Uterus (tissue), 4 donors: ENCODE measurements at regions of chr17 and their contacts with region 1.

Region 1: DNA sequence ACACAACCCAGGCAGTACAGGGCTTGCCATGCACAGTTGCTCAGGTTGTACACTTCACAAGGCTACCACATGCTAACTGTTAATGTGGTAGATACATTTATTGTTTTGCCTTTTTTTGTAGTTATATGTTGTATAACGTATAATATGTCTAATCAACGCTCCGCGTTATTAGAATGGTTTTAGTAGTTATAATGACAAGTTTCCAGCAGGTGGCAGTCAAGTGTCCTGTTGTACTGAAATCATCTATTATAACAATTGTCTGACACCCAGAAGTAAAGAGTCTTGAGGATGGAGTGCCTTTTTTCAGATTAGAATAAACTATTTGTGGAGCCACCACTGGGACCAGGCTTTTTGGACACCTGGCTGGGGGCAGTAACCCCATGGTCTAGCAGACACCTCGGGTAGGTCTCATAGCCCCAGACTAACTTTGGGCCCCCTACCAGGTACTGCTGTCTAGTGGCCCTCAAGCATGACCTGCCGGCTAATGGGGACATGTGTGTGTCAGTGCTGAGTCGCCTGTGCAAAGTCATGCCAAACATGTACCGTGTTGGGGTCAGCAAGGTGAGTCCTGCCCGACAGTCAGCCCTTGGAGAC is 32.8 kb downstream of the MYO15A start:
- DNase-seq: peak in 1 of 2 donors; percentile 47
- H3K4me3 ChIP-seq: no peak overlapping the region
- H3K27ac ChIP-seq: no peak overlapping the region
- H3K4me1 ChIP-seq: no peaks in the 10 kb centered on the region
- H3K27me3 ChIP-seq: no peaks in the 10 kb centered on the region
- CTCF ChIP-seq: peak; percentile 60 to 83 (median 68)
- POLR2A ChIP-seq: no peak

Region 2: DNA sequence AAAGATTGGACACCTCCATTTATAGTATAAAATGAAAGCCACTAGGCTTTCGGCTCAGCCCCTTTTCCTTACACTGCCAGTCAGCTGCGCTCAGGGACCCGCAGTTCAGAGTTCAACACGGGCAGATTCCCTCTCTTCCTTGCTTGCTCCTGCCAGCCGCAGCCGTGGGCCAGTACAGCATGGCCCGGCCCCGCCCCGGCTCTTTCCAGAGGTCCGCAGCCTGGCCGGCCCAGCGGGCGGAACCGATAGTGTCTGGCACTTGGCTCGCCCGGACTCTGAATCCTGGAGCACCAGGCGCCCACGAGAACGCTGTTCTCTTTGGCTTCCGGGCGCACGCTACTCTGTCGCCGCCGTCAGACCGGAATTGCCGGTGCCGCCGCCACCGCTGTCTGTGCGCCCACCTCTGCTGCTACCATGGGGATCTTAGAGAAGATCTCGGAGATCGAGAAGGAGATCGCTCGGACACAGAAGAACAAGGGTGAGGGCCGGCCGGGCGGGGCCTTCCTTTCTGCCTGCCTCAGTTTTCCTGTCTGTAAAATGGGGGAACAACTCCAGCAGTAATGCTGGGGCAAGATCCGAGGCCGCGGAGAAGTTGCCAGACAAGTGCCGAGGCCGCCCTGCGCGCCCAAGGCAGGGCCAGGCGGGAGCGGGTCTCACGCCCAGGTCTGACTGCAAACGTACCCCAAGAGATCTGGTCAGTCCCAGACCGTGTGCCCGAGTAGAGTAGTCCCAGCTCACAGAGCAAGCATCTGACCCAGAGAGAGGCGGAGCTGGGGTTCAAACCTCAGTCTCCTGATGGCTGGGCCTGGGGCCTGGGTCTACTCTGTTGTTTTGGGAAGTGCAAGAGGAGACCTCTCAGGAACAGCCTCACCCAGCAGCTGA is 53.5 kb before region 1 on chr17 and contains the start of gene DRG2:
- intact Hi-C with region 1: no loop called
- DNase-seq: peak; percentile 87 to 95
- H3K4me3 ChIP-seq: peak within 1 kb of the TSS; percentile 76 to 78
- H3K27ac ChIP-seq: peak within 1 kb of the TSS; percentile 78 to 89
- H3K4me1 ChIP-seq: no peaks in the 10 kb centered on the region
- H3K27me3 ChIP-seq: no peaks in the 10 kb centered on the region
- CTCF ChIP-seq: peak in 3 of 4 experiments; percentile 19 to 59 (median 50)
- POLR2A ChIP-seq: peak in 1 of 2 donors; percentile 45
- total RNA-seq, gene DRG2: 33.0 to 45.6 (median 41.4) TPM

Region 3: GRCh38 chr17:18217412-18218015 is 76.2 kb after region 1 on chr17:
- intact Hi-C with region 1: loop called (anchors 5 kb)
- DNase-seq: peak; percentile 71 to 78
- H3K4me3 ChIP-seq: no peak overlapping the region
- H3K27ac ChIP-seq: no peak overlapping the region
- H3K4me1 ChIP-seq: no peaks in the 10 kb centered on the region
- H3K27me3 ChIP-seq: no peaks in the 10 kb centered on the region
- CTCF ChIP-seq: peak; percentile 78 to 95 (median 89)
- POLR2A ChIP-seq: no peak